ENCODE measurements at regions of chrX and their contacts with region 1.

Region 1: GRCh38 chrX:10189317-10190268 is 32.8 kb downstream of the CLCN4 start:
- DNase-seq: no peak
- H3K4me3 ChIP-seq: no peak overlapping the region
- H3K27ac ChIP-seq: no peak overlapping the region
- H3K4me1 ChIP-seq: no peaks in the 10 kb centered on the region
- H3K27me3 ChIP-seq: no peaks in the 10 kb centered on the region
- CTCF ChIP-seq: peak; percentile 70 to 83 (median 83)

Region 2: DNA sequence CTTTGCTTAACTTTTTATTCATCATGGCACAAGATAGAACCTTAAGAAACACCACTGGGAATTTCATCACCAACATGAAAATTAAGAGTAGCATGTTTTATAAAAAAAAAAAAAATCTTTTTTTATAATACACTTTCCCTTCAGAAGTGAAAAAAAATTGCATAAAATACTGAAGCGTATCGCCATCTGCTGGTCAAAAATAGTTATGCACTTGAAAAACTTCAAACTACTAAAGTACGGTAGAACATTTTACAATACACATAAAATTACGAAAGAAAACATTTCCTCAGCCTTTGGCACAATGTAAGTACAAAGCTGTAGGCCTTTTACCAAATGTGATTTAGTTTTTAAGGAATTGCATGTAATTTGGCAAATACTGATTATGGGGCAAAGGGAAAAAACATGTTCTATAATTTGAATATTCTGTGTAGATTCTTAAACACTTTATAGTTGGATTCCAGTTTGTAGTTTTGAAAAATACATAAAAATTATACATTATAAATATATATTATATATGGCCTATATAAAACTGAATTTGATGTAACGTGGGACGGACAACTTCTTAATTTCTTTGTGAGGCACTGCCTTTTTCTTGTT is 948.0 kb after region 1 on chrX:
- dilution Hi-C with region 1: loop called (anchors 10 kb)
- DNase-seq: no peak
- H3K4me3 ChIP-seq: no peak overlapping the region
- H3K27ac ChIP-seq: no peak overlapping the region
- H3K4me1 ChIP-seq: no peaks in the 10 kb centered on the region
- H3K27me3 ChIP-seq: no peaks in the 10 kb centered on the region
- CTCF ChIP-seq: peak in 2 of 3 experiments; percentile 28 to 32

Measured in keratinocyte (primary cell).